Pancreas (tissue), 10 donors: ENCODE measurements at regions of chr2 and their contacts with region 1.

Region 1: DNA sequence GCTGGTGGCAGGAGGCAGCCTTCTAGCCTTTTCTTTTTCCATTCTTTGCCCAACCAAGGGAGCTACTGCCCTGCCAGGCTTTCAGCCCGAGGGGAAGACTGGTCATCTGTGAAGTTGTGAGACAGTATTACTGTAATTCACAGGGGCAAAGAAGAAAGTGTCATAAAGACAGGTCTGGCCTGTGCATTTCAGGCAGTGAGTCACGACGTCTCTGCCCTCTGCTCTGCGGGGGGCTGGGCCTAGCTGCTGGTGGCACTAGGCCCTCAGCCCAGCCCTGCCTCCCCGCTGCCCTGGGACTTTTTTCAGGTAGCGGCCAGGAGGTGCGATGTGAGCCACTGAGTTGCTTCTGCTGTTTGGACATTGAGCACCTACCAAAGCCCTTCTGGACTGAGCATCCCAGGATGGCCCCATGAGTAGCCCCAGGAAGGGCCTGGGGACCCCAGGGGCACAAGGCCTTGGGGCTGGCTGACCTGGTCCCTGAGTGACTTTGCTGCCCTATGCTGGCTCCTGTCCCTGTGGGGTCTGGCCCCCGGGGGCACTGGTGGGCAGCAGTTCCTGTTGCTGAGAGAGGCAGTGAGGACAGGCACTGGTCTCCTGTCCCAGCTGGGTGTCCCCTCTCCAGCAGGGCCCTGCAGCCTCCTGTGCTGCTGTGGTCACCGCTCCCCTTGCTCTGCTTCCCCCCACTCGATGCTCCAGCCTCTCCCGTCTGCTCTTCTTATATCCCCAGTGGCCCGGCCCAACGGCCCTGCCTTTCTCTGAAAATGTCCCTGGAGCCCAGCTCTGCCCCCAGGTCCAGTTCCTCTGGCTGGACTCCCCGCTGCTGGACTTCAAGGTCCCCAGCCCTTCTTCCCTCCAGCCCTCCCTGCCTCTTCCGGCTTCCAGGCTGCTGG is 7.0 kb downstream of the INHBB start:
- DNase-seq: peak in 1 of 6 donors; percentile 31
- ATAC-seq: no peak
- H3K4me3 ChIP-seq: no peak overlapping the region
- H3K27ac ChIP-seq: no peak overlapping the region
- H3K4me1 ChIP-seq: no peaks in the 10 kb centered on the region
- H3K27me3 ChIP-seq: peaks cover 0 to 4% (median 0%) of the 10 kb centered on the region in 4 donors
- CTCF ChIP-seq: no peak

Region 2: GRCh38 chr2:120511947-120512710 is 159.2 kb after region 1 on chr2:
- intact Hi-C with region 1: loop called in 1 of 3 experiments (anchors 10 kb)
- DNase-seq: peak in 1 of 6 donors; percentile 32
- ATAC-seq: no peak
- H3K4me3 ChIP-seq: no peak overlapping the region
- H3K27ac ChIP-seq: no peak overlapping the region
- H3K4me1 ChIP-seq: no peaks in the 10 kb centered on the region
- H3K27me3 ChIP-seq: no peaks in the 10 kb centered on the region
- CTCF ChIP-seq: no peak